ENCODE measurements at regions of chr16 and their contacts with region 1.

Region 1: GRCh38 chr16:55944377-55944802 is 69.2 kb upstream of the CES5A start:
- DNase-seq: peak; percentile 51
- H3K4me3 Mint-ChIP-seq: no peak overlapping the region
- H3K27ac Mint-ChIP-seq: no peak overlapping the region
- H3K4me1 Mint-ChIP-seq: no peaks in the 10 kb centered on the region
- H3K27me3 Mint-ChIP-seq: peaks cover 33% of the 10 kb centered on the region

Region 2: GRCh38 chr16:56317998-56318826 is 373.8 kb after region 1 on chr16:
- CTCF ChIA-PET with region 1: interaction called, 48 read pairs
- POLR2A ChIA-PET with region 1: interaction called, 3 read pairs
- DNase-seq: peak; percentile 81
- H3K4me3 Mint-ChIP-seq: no peak overlapping the region
- H3K27ac Mint-ChIP-seq: no peak overlapping the region
- H3K4me1 Mint-ChIP-seq: peaks cover 5% of the 10 kb centered on the region
- H3K27me3 Mint-ChIP-seq: peaks cover 5% of the 10 kb centered on the region

Region 3: DNA sequence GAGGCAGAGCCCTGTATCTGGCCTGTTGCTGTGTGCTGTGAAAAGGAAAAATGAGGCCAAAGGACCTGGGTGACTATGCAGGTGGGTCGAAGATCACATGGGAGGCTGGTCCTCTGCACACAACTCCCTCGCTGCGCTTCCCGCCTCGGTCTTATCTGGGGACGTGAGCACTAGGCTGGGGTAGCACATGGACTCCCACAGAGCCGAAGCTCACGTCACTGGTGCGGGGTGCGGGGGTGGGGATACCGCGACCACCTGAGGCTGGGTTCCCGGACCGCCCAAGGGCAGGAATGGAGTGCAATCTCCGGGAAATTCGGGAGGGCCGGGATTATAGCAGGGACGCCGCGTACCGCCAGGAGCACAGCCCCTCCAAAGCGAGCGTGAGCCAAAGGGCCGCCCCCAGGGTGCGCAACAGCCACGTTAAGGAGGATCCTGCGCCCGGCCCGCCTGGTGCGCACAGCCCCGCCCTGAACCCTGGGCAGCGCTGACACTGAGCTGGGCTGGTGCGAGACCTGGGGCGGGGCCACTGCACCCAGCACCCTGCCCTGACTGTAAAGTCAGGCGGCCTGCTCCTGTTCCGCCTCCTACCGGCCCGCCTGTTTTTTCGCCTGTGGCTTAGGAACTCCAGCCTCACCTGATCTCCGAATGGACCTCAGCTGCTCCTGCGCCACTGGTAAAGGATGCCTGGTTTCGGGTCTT is 698.8 kb after region 1 on chr16:
- CTCF ChIA-PET with region 1: no interaction called
- POLR2A ChIA-PET with region 1: no interaction called
- DNase-seq: peak; percentile 85
- H3K4me3 Mint-ChIP-seq: peak overlapping the region; percentile 58
- H3K27ac Mint-ChIP-seq: no peak overlapping the region
- H3K4me1 Mint-ChIP-seq: peaks cover 24% of the 10 kb centered on the region
- H3K27me3 Mint-ChIP-seq: peaks cover 68% of the 10 kb centered on the region